Calu3 (cell line): ENCODE measurements at regions of chr9 and their contacts with region 1.

Region 1: GRCh38 chr9:2228132-2228531 is 213.0 kb downstream of the SMARCA2 start:
- DNase-seq: peak; percentile 23
- H3K4me3 Mint-ChIP-seq: no peak overlapping the region
- H3K27ac Mint-ChIP-seq: no peak overlapping the region
- H3K4me1 Mint-ChIP-seq: peaks cover 15% of the 10 kb centered on the region
- H3K27me3 Mint-ChIP-seq: no peaks in the 10 kb centered on the region
- CTCF ChIP-seq: no peak

Region 2: DNA sequence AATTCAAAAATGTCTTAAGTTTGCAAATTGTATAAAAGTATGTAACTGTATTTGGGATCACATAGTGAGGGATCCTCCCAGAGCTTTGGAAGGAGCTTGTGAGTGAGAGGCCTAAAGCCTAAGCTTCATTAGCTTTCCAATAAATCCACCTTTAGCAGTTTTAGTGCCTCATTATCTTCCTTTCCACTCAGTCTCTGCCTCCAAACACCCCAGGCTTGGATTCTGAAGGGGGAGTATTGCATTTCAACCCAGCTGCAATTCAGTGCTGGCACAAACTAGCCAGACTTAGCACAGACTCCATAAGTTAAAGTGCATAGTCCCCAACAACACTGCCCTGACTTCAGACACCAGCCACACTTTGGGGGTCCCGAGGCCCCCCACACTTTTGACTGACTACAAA is 99.5 kb before region 1 on chr9:
- CTCF ChIA-PET with region 1: no interaction called
- intact Hi-C with region 1: no loop called
- DNase-seq: no peak
- H3K4me3 Mint-ChIP-seq: no peak overlapping the region
- H3K27ac Mint-ChIP-seq: no peak overlapping the region
- H3K4me1 Mint-ChIP-seq: no peaks in the 10 kb centered on the region
- H3K27me3 Mint-ChIP-seq: no peaks in the 10 kb centered on the region
- CTCF ChIP-seq: no peak

Region 3: DNA sequence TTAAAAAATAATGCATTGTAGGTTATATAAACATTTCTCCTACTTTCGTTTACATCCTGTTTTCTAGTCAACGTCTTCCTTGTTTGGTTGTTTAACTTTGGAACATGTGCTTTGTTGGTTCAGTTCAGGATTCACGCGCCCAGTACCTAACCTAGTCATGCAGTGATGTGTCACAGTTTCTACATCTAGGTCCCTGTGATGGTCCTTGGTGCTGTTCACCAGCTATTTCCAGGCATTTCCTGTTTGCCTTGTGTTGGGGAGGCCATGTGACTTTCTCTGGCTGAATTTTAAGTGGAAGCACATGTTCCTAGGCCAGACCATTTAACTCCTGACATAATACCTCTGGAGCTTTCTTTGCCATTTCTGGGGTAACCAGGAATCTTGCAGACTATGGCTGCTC is 79.3 kb after region 1 on chr9:
- CTCF ChIA-PET with region 1: no interaction called
- intact Hi-C with region 1: no loop called
- DNase-seq: no peak
- H3K4me3 Mint-ChIP-seq: no peak overlapping the region
- H3K27ac Mint-ChIP-seq: no peak overlapping the region
- H3K4me1 Mint-ChIP-seq: no peaks in the 10 kb centered on the region
- H3K27me3 Mint-ChIP-seq: no peaks in the 10 kb centered on the region
- CTCF ChIP-seq: no peak

Region 4: DNA sequence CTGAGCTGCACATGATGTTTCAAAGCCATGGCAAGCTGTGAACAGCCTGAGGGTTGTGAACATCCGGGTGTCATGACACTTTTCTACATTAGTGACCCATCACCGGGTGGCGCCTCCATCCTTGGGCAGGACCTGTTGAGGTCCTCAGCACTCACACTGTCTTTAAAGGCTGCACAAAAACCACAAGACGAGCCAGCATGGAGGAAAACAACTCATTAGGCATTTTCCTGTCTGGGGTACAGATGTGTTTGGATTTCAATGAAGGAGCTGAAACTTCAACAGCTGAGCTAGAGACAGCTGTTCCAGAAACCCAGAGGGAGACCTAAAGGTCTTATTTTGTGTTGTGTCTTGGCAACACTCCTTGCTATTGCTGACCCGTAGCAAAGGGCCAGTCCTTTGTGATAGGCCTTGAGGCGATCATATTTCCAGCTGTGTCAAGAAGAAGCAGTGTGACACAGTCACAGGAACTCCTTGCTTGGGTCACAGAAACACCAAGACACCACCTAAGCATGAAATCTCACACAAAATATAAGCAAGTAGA is 241.6 kb after region 1 on chr9:
- CTCF ChIA-PET with region 1: interaction called, 4 read pairs
- intact Hi-C with region 1: loop called (anchors 2 kb)
- DNase-seq: peak; percentile 35
- H3K4me3 Mint-ChIP-seq: no peak overlapping the region
- H3K27ac Mint-ChIP-seq: no peak overlapping the region
- H3K4me1 Mint-ChIP-seq: peaks cover 26% of the 10 kb centered on the region
- H3K27me3 Mint-ChIP-seq: no peaks in the 10 kb centered on the region
- CTCF ChIP-seq: no peak